ENCODE measurements at regions of chr10 and their contacts with region 1.

Region 1: DNA sequence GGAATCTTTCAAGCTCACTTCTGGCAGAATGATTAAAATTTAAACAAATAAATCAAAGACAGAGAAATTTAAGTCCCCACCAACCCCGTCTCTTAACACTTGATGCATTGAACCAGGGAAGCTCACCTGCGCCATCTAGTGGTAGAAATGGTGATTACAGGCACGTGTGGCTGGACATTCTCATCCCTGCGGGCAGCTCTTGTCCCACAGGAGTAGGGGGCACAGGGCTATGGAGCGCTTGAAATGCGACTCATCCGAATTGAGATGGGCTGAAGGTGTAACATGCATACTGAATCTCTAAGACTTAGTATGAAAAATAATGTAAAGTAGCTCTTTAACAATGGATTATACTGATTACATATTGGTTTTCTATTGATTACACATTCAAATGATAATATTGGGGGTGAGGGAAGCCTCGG is 24.8 kb upstream of the SLIT1 start:
- DNase-seq: peak; percentile 68 to 81
- H3K4me3 ChIP-seq: no peak overlapping the region
- H3K4me3 Mint-ChIP-seq: no peak overlapping the region
- H3K27ac Mint-ChIP-seq: no peak overlapping the region
- H3K4me1 ChIP-seq: no peaks in the 10 kb centered on the region
- H3K4me1 Mint-ChIP-seq: no peaks in the 10 kb centered on the region
- H3K27me3 ChIP-seq: no peaks in the 10 kb centered on the region; the same call in 1 of the 2 replicates
- H3K27me3 Mint-ChIP-seq: peaks cover 2% of the 10 kb centered on the region
- CTCF ChIP-seq: peak; percentile 92 to 98

Region 2: DNA sequence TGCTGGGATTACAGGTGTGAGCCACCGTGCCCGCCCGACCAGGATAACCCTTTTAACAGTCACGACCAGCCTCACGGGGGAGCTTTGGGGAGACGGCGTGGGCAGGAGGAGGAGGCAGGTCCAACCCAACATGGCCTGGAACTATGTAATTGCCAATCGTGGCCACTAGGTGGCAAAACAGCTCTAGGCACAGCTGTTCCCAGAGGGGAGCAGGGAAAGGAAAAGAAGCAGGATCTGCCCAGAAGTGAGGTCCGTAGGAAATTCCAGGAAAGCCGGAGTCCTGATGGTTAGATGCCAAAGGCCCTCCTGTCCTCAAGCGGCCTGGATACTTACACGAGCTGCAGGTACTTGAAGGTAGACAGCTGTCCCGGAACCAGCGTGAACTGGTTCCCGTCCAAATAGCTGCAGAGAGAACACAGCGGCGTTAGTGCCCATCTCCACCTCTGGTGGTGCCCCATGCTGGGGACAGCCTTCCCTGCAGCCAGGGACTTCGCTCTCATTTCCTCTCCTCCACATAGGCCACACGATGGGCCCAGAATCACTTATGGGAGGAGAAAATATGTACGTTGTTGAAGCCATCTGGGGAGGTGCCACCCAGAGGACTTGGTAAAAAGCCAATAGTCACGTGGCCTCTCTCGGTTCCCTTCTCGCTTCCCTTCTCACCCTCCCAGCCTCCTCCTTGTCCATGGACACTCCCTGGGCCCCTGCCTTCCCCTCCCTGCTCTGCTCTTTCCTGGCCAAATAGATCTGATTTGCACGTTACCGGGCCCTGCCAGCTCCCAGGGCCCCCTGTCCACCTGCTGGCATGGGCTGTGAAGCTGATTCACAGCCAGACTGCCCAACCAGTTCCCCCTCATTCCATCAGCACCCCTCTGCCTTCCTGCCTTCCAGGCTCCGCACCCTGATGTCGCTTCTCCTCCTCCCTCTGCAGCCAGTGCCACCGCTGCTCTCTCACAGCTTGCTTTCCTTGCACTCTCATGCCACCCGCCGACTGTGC is 172.9 kb before region 1 on chr10:
- CTCF ChIA-PET with region 1: interaction called, 16 read pairs
- POLR2A ChIA-PET with region 1: no interaction called
- intact Hi-C with region 1: loop called (anchors 1 kb)
- DNase-seq: peak; percentile 82 to 85
- H3K4me3 ChIP-seq: no peak overlapping the region
- H3K4me3 Mint-ChIP-seq: no peak overlapping the region
- H3K27ac Mint-ChIP-seq: no peak overlapping the region
- H3K4me1 ChIP-seq: peaks cover 2% of the 10 kb centered on the region; the same call in 1 of the 2 replicates
- H3K4me1 Mint-ChIP-seq: no peaks in the 10 kb centered on the region
- H3K27me3 ChIP-seq: no peaks in the 10 kb centered on the region
- H3K27me3 Mint-ChIP-seq: peaks cover 13% of the 10 kb centered on the region
- CTCF ChIP-seq: peak; percentile 84 to 91

Region 3: GRCh38 chr10:97138174-97138573 is 72.4 kb before region 1 on chr10:
- CTCF ChIA-PET with region 1: interaction called, 4 read pairs
- POLR2A ChIA-PET with region 1: no interaction called
- intact Hi-C with region 1: loop called (anchors 1 kb)
- DNase-seq: peak; percentile 56 to 66
- H3K4me3 ChIP-seq: no peak overlapping the region
- H3K4me3 Mint-ChIP-seq: no peak overlapping the region
- H3K27ac Mint-ChIP-seq: no peak overlapping the region
- H3K4me1 ChIP-seq: no peaks in the 10 kb centered on the region; the same call in 1 of the 2 replicates
- H3K4me1 Mint-ChIP-seq: no peaks in the 10 kb centered on the region
- H3K27me3 ChIP-seq: no peaks in the 10 kb centered on the region
- H3K27me3 Mint-ChIP-seq: peaks cover 9% of the 10 kb centered on the region
- CTCF ChIP-seq: peak; percentile 62 to 68

Region 4: GRCh38 chr10:97190450-97190849 is 20.1 kb before region 1 on chr10:
- CTCF ChIA-PET with region 1: interaction called, 4 read pairs
- POLR2A ChIA-PET with region 1: no interaction called
- intact Hi-C with region 1: loop called (anchors 2 kb)
- DNase-seq: peak in 1 of 2 experiments; percentile 24
- H3K4me3 ChIP-seq: no peak overlapping the region
- H3K4me3 Mint-ChIP-seq: no peak overlapping the region
- H3K27ac Mint-ChIP-seq: no peak overlapping the region
- H3K4me1 ChIP-seq: peaks cover 9% of the 10 kb centered on the region; the same call in 1 of the 2 replicates
- H3K4me1 Mint-ChIP-seq: peaks cover 13% of the 10 kb centered on the region
- H3K27me3 ChIP-seq: no peaks in the 10 kb centered on the region
- H3K27me3 Mint-ChIP-seq: peaks cover 3% of the 10 kb centered on the region
- CTCF ChIP-seq: no peak

Region 5: DNA sequence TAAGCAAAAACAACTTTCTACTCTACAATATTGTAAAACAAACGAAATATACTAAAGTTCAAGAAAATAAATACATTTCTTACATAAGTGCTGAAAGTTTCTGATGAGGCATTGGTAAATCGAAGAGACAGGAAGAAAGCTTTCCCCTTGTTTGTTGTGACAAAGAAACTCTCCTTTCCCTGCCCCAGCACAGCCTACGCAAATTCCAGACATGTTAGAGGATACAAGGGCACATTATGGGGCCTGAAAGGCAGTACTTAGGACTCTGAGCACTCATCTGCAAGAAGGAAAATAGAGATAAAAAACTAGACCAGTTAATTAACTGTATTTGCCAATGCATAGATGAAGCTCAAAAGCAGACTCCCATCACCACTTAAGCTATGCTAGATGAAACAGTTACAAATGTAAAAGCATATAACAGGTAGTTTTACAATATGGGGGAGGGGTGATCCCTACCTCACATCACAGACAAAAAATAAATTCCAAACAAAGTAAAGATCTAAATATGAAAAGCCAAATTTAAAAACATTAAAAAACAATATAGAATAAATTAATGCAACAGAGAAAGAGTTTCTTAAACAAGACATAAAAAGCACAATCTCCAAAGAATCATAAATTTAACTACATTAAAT is 60.1 kb after region 1 on chr10:
- CTCF ChIA-PET with region 1: no interaction called
- POLR2A ChIA-PET with region 1: no interaction called
- intact Hi-C with region 1: no loop called
- DNase-seq: no peak
- H3K4me3 ChIP-seq: no peak overlapping the region
- H3K4me3 Mint-ChIP-seq: no peak overlapping the region
- H3K27ac Mint-ChIP-seq: no peak overlapping the region
- H3K4me1 ChIP-seq: no peaks in the 10 kb centered on the region
- H3K4me1 Mint-ChIP-seq: no peaks in the 10 kb centered on the region
- H3K27me3 ChIP-seq: no peaks in the 10 kb centered on the region
- H3K27me3 Mint-ChIP-seq: no peaks in the 10 kb centered on the region
- CTCF ChIP-seq: no peak